PC-3 (cell line): ENCODE measurements at regions of chr9 and their contacts with region 1.

Region 1: DNA sequence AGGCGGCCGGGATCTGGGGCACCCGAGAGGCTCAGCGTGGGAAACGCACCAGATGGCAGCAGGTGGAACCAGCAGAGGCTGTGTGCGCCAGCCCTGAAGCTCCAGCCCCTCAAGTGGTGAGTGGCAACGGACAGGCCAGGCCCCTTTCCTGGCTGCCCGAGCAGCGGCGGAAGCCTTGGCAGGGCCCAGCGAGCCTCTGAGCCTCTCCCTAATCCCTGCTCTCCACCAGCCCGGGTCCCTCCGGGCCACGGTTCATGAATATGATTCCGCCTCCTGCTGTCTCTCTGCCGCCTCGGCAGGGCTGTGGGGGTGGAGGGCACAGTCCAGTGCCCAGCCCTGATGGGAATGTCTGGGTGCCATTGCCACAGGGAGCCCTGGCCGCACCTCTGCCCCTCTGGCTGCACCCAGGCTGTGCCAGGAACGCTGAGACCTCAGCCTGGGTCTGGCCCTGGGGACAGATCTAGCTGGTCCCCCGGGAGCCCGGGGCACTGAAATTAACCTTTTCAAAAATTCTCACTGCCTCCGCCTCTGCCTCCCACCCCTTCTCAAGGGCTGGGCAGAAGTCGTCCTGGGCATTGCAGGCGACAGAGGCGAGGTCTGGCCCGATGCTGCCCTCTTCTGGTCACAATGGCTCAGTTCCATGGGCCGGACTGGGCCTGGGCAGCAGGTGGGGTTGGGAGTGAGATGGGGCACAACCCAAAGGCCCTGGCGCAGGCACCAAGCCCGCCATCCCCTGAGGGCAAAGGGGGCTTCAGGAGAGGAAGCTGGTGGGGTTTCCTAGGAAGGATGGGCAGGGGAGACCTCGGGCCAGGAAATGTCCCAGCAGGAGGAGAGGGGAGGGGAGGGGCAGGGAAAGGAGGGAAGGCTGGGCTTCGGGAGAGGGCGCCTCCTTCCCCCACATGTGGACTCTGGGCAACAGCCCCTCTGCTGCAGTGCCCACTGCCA is 20.3 kb downstream of the CCDC187 start:
- DNase-seq: peak; percentile 76
- ATAC-seq: peak; percentile 98
- H3K4me3 ChIP-seq: peak overlapping the region; percentile 68
- H3K27ac ChIP-seq: no peak overlapping the region
- H3K4me1 ChIP-seq: peaks cover 5% of the 10 kb centered on the region; the same call in 1 of the 2 replicates
- H3K27me3 ChIP-seq: no peaks in the 10 kb centered on the region
- CTCF ChIP-seq: peak; percentile 75

Region 2: DNA sequence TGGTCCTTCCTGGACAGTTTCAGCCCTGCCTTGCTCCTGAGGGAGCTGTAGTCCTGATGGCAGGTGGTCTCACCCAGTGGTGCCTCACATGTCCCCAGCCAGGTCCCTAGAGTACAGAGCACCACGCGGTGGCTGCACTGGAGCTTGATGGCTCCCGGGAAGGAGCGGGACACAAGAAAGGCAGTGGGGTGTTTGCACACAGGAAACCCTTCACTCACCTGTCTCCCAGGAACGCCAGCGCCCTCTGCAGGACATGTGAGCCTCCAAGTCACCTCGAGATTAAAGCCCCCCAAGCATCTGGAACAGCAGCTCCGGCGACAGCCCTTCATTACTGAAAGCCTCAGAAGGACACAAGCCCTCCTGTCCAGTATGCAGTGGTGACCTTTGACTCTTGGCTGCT is 145.0 kb before region 1 on chr9:
- CTCF ChIA-PET with region 1: no interaction called
- POLR2A ChIA-PET with region 1: no interaction called
- intact Hi-C with region 1: loop called (anchors 5 kb)
- DNase-seq: peak; percentile 58
- ATAC-seq: no peak
- H3K4me3 ChIP-seq: no peak overlapping the region
- H3K27ac ChIP-seq: no peak overlapping the region
- H3K4me1 ChIP-seq: no peaks in the 10 kb centered on the region
- H3K27me3 ChIP-seq: no peaks in the 10 kb centered on the region
- CTCF ChIP-seq: peak; percentile 61